ENCODE measurements at regions of chr15 and their contacts with region 1.

Region 1: GRCh38 chr15:99143655-99144610 is 39.1 kb downstream of the SYNM start:
- DNase-seq: peak; percentile 54
- H3K4me3 ChIP-seq: no peak overlapping the region
- H3K27ac ChIP-seq: peak overlapping the region; percentile 44 to 91 (median 79)
- H3K4me1 ChIP-seq: peaks cover 11 to 26% (median 17%) of the 10 kb centered on the region in 4 donors
- H3K27me3 ChIP-seq: no peaks in the 10 kb centered on the region
- CTCF ChIP-seq: no peak
- EP300 ChIP-seq: peak; percentile 76
- POLR2A ChIP-seq: no peak

Region 2: GRCh38 chr15:99014803-99015676 is 128.9 kb before region 1 on chr15:
- in situ Hi-C with region 1: no loop called
- intact Hi-C with region 1: loop called (anchors 5 kb)
- DNase-seq: peak; percentile 47
- H3K4me3 ChIP-seq: peak overlapping the region; percentile 45 to 74 (median 55)
- H3K27ac ChIP-seq: peak overlapping the region in 3 of 4 donors; percentile 42 to 58 (median 56)
- H3K4me1 ChIP-seq: peaks cover 4 to 15% (median 12%) of the 10 kb centered on the region in 4 donors
- H3K27me3 ChIP-seq: peaks cover 20% of the 10 kb centered on the region
- CTCF ChIP-seq: no peak
- EP300 ChIP-seq: no peak
- POLR2A ChIP-seq: no peak

Region 3: GRCh38 chr15:99132634-99133287 is 11.2 kb before region 1 on chr15:
- in situ Hi-C with region 1: no loop called
- intact Hi-C with region 1: loop called (anchors 1 kb)
- DNase-seq: no peak
- H3K4me3 ChIP-seq: no peak overlapping the region
- H3K27ac ChIP-seq: peak overlapping the region; percentile 5 to 92 (median 82)
- H3K4me1 ChIP-seq: peaks cover 0 to 6% (median 0%) of the 10 kb centered on the region in 4 donors
- H3K27me3 ChIP-seq: no peaks in the 10 kb centered on the region
- CTCF ChIP-seq: no peak
- EP300 ChIP-seq: no peak
- POLR2A ChIP-seq: no peak

Measured in transverse colon (tissue), 4 donors.